ENCODE measurements at regions of chr2 and their contacts with region 1.

Region 1: GRCh38 chr2:106004851-106005250 is 189.2 kb downstream of the UXS1 start:
- DNase-seq: no peak
- ATAC-seq: no peak
- H3K4me3 ChIP-seq: no peak overlapping the region
- H3K4me3 Mint-ChIP-seq: no peak overlapping the region
- H3K27ac ChIP-seq: no peak overlapping the region
- H3K27ac Mint-ChIP-seq: no peak overlapping the region
- H3K4me1 ChIP-seq: no peaks in the 10 kb centered on the region
- H3K4me1 Mint-ChIP-seq: peaks cover 0 to 2% (median 0%) of the 10 kb centered on the region in 7 donors
- H3K27me3 ChIP-seq: no peaks in the 10 kb centered on the region
- H3K27me3 Mint-ChIP-seq: peaks cover 0 to 18% (median 0%) of the 10 kb centered on the region in 5 donors

Region 2: GRCh38 chr2:105682401-105682800 is 322.4 kb before region 1 on chr2:
- CTCF ChIA-PET with region 1: no interaction called
- POLR2A ChIA-PET with region 1: no interaction called
- intact Hi-C with region 1: no loop called
- DNase-seq: no peak
- ATAC-seq: no peak
- H3K4me3 ChIP-seq: no peak overlapping the region
- H3K4me3 Mint-ChIP-seq: no peak overlapping the region
- H3K27ac ChIP-seq: no peak overlapping the region
- H3K27ac Mint-ChIP-seq: no peak overlapping the region
- H3K4me1 ChIP-seq: no peaks in the 10 kb centered on the region
- H3K4me1 Mint-ChIP-seq: peaks cover 0 to 7% (median 0%) of the 10 kb centered on the region in 7 donors
- H3K27me3 ChIP-seq: no peaks in the 10 kb centered on the region
- H3K27me3 Mint-ChIP-seq: peaks cover 0 to 7% (median 0%) of the 10 kb centered on the region in 5 donors

Region 3: GRCh38 chr2:105969555-105969954 is 35.3 kb before region 1 on chr2:
- CTCF ChIA-PET with region 1: no interaction called
- POLR2A ChIA-PET with region 1: no interaction called
- intact Hi-C with region 1: loop called in 1 of 2 experiments (anchors 5 kb)
- DNase-seq: no peak
- ATAC-seq: no peak
- H3K4me3 ChIP-seq: no peak overlapping the region
- H3K4me3 Mint-ChIP-seq: no peak overlapping the region
- H3K27ac ChIP-seq: no peak overlapping the region
- H3K27ac Mint-ChIP-seq: no peak overlapping the region
- H3K4me1 ChIP-seq: peaks cover 0 to 27% of the 10 kb centered on the region in 2 donors
- H3K4me1 Mint-ChIP-seq: peaks cover 8 to 61% (median 37%) of the 10 kb centered on the region in 7 donors
- H3K27me3 ChIP-seq: no peaks in the 10 kb centered on the region
- H3K27me3 Mint-ChIP-seq: peaks cover 0 to 2% (median 0%) of the 10 kb centered on the region in 5 donors

Region 4: DNA sequence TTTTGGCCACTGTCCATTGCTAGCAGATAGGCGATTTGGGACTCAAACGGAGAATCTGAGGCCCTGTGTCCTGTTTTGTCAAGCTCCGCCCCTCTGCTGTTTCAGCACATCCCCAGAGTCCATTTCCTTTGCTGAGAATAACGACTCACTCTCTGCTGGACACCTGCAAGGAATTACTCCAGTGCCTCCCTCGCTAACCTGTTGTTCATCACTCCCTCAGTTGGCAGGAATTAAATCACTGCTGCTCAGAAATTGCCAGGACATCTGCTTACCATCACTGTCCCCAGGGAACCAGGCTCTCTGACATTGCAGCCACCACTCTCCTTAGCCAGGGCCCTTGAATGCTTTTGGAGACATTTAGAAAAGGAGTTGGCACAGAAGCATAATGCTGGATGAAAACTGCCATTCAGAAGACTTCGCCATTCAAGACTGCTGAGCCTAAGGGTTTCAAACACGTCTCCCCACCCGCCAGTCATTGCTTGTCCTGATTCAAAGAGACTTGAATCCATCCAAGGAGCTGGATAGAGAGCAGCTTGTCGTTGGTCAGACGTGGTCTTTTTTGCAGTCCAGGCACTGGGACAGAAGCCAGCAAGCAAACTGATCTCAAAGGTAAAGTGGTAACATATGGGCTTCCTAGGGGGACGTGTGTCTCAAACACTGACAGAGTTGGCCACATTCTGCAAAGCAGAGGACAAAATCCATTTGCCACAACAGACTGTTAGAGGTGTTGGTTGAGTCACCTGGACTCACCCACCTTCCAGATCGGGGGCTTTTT is 33.9 kb after region 1 on chr2:
- CTCF ChIA-PET with region 1: no interaction called
- POLR2A ChIA-PET with region 1: no interaction called
- intact Hi-C with region 1: loop called in 1 of 2 experiments (anchors 5 kb)
- DNase-seq: no peak
- ATAC-seq: no peak
- H3K4me3 ChIP-seq: no peak overlapping the region
- H3K4me3 Mint-ChIP-seq: no peak overlapping the region
- H3K27ac ChIP-seq: no peak overlapping the region
- H3K27ac Mint-ChIP-seq: peak overlapping the region in 1 of 9 donors; percentile 12
- H3K4me1 ChIP-seq: no peaks in the 10 kb centered on the region
- H3K4me1 Mint-ChIP-seq: peaks cover 0 to 44% (median 22%) of the 10 kb centered on the region in 7 donors
- H3K27me3 ChIP-seq: no peaks in the 10 kb centered on the region
- H3K27me3 Mint-ChIP-seq: peaks cover 0 to 12% (median 0%) of the 10 kb centered on the region in 5 donors